ENCODE measurements at regions of chr18 and their contacts with region 1.

Region 1: GRCh38 chr18:21704603-21705364 is at the start of gene ABHD3:
- DNase-seq: peak; percentile 85 to 94 (median 91)
- ATAC-seq: peak; percentile 97
- H3K4me3 ChIP-seq: peak within 1 kb of the TSS; percentile 83
- H3K4me3 Mint-ChIP-seq: peak within 1 kb of the TSS; percentile 91 to 99 (median 97)
- H3K27ac ChIP-seq: peak within 1 kb of the TSS; percentile 93
- H3K27ac Mint-ChIP-seq: peak within 1 kb of the TSS; percentile 87 to 97 (median 94)
- H3K4me1 ChIP-seq: peaks cover 10 to 21% of the 10 kb centered on the region in 2 donors
- H3K4me1 Mint-ChIP-seq: peaks cover 12 to 56% (median 39%) of the 10 kb centered on the region in 7 donors
- H3K27me3 ChIP-seq: no peaks in the 10 kb centered on the region
- H3K27me3 Mint-ChIP-seq: no peaks in the 10 kb centered on the region
- total RNA-seq, gene ABHD3: 26.9 to 53.1 (median 43.6) TPM

Region 2: GRCh38 chr18:21612125-21612991 is 92.4 kb before region 1 on chr18 and contains the start of gene SNRPD1:
- CTCF ChIA-PET with region 1: interaction called, 3 read pairs
- POLR2A ChIA-PET with region 1: interaction called, 11 read pairs
- intact Hi-C with region 1: loop called (anchors 1 kb)
- DNase-seq: peak; percentile 75 to 95 (median 87)
- ATAC-seq: peak; percentile 100
- H3K4me3 ChIP-seq: peak within 1 kb of the TSS; percentile 99
- H3K4me3 Mint-ChIP-seq: peak within 1 kb of the TSS; percentile 90 to 100 (median 96)
- H3K27ac ChIP-seq: peak within 1 kb of the TSS; percentile 95
- H3K27ac Mint-ChIP-seq: peak within 1 kb of the TSS; percentile 91 to 99 (median 98)
- H3K4me1 ChIP-seq: peaks cover 14 to 21% of the 10 kb centered on the region in 2 donors
- H3K4me1 Mint-ChIP-seq: peaks cover 20 to 56% (median 46%) of the 10 kb centered on the region in 7 donors
- H3K27me3 ChIP-seq: no peaks in the 10 kb centered on the region
- H3K27me3 Mint-ChIP-seq: no peaks in the 10 kb centered on the region
- total RNA-seq, gene SNRPD1: 21.9 to 83.4 (median 26.5) TPM

Region 3: GRCh38 chr18:21682371-21683051 is 22.3 kb before region 1 on chr18:
- CTCF ChIA-PET with region 1: interaction called, 7 read pairs
- POLR2A ChIA-PET with region 1: interaction called, 14 read pairs
- intact Hi-C with region 1: loop called (anchors 1 kb)
- DNase-seq: peak in 8 of 9 donors; percentile 24 to 63 (median 47)
- ATAC-seq: peak; percentile 84
- H3K4me3 ChIP-seq: peak overlapping the region; percentile 63
- H3K4me3 Mint-ChIP-seq: no peak overlapping the region
- H3K27ac ChIP-seq: peak overlapping the region; percentile 80
- H3K27ac Mint-ChIP-seq: no peak overlapping the region
- H3K4me1 ChIP-seq: peaks cover 7% of the 10 kb centered on the region in 2 donors
- H3K4me1 Mint-ChIP-seq: peaks cover 0 to 23% (median 10%) of the 10 kb centered on the region in 7 donors
- H3K27me3 ChIP-seq: no peaks in the 10 kb centered on the region
- H3K27me3 Mint-ChIP-seq: no peaks in the 10 kb centered on the region

Region 4: GRCh38 chr18:21740724-21741510 is 36.1 kb after region 1 on chr18 and contains the start of gene MIB1:
- CTCF ChIA-PET with region 1: interaction called, 3 read pairs
- POLR2A ChIA-PET with region 1: interaction called, 9 read pairs
- intact Hi-C with region 1: loop called (anchors 1 kb)
- DNase-seq: peak in 8 of 9 donors; percentile 42 to 99 (median 99)
- ATAC-seq: peak; percentile 69
- H3K4me3 ChIP-seq: peak within 1 kb of the TSS; percentile 77
- H3K4me3 Mint-ChIP-seq: peak within 1 kb of the TSS; percentile 83 to 96 (median 94)
- H3K27ac ChIP-seq: peak within 1 kb of the TSS; percentile 83
- H3K27ac Mint-ChIP-seq: peak within 1 kb of the TSS; percentile 78 to 97 (median 94)
- H3K4me1 ChIP-seq: peaks cover 9 to 13% of the 10 kb centered on the region in 2 donors
- H3K4me1 Mint-ChIP-seq: peaks cover 21 to 58% (median 43%) of the 10 kb centered on the region in 7 donors
- H3K27me3 ChIP-seq: no peaks in the 10 kb centered on the region
- H3K27me3 Mint-ChIP-seq: peaks cover 0 to 18% (median 0%) of the 10 kb centered on the region in 5 donors
- total RNA-seq, gene MIB1: 16.0 to 35.2 (median 19.8) TPM

Region 5: GRCh38 chr18:21851327-21851972 is 146.7 kb after region 1 on chr18:
- CTCF ChIA-PET with region 1: no interaction called
- POLR2A ChIA-PET with region 1: no interaction called
- intact Hi-C with region 1: loop called in 1 of 2 experiments (anchors 5 kb)
- DNase-seq: peak in 4 of 9 donors; percentile 1 to 17 (median 4)
- ATAC-seq: no peak
- H3K4me3 ChIP-seq: no peak overlapping the region
- H3K4me3 Mint-ChIP-seq: no peak overlapping the region
- H3K27ac ChIP-seq: no peak overlapping the region
- H3K27ac Mint-ChIP-seq: peak overlapping the region in 1 of 9 donors; percentile 18
- H3K4me1 ChIP-seq: no peaks in the 10 kb centered on the region
- H3K4me1 Mint-ChIP-seq: peaks cover 0 to 11% (median 9%) of the 10 kb centered on the region in 7 donors
- H3K27me3 ChIP-seq: no peaks in the 10 kb centered on the region
- H3K27me3 Mint-ChIP-seq: no peaks in the 10 kb centered on the region

Measured in naive thymus-derived CD4-positive, alpha-beta T cell (primary cell).